ENCODE measurements at regions of chr18 and their contacts with region 1.

Region 1: DNA sequence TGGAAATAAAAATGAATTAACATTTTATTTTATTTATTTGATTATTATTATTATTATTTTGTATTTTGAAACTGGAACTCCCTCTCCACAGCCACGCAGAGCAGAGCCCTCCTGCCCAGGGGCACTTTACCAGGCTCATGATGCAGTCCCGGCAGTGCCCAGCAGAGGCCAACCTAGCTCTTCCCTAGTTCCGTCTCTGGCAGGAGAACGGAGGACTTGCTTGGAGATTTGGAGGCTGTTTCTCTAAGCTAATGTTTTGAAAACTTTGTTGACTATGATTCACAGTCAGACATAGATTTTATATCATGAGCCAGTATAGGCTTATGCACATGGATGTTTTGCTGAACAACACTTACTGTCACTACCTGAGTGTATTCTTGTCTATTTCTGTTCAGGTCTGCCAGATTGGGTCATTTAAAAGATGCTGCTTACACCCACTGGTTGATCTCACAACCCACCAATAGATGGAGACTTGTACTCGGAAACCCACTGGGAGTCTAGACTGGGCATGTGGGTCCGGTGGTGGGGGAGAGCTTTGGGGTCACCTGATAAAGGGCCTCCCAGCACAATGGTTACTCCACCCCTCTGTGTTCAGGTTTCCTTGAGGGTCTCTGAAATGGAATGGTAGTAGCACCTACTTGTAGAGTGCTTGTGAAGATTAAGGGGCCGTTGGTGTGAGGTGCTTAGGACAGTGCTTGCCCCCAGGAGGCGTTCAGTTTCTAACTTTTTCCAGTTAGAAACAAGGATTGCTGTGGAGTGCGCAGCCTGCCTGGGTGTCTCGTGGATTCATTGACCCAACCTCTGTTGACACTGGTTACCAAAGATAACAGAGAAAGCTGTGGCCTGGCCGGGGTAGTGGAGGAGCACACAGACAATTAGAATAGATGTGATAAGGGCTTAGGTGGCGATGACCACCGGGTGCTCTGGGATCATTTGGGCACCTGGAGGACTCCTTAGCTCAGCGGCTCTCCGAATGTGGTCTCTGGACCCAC is 177.3 kb downstream of the HAUS1 start:
- DNase-seq: peak; percentile 81
- H3K4me3 Mint-ChIP-seq: no peak overlapping the region
- H3K27ac Mint-ChIP-seq: no peak overlapping the region
- H3K4me1 Mint-ChIP-seq: peaks cover 25% of the 10 kb centered on the region
- H3K27me3 Mint-ChIP-seq: no peaks in the 10 kb centered on the region
- CTCF ChIP-seq: peak; percentile 89

Region 2: DNA sequence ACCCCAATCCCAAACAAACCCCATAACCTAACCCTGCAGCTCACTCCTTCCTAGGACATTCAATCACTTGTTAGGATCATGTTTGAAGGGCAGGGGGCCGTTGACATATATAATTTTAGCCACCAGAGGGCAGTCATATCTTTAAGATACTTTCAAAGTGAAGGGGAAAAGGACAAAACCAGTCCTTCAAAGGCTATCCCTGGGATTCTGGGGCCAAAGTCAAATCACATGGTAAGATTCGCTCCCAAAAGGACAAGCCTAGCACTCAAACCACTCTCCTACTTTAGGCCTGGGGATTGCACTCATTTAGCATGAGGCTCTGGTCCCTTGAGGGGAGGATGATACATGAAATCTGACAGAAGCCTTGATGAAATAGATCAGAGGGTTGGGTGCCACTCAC is 132.7 kb before region 1 on chr18:
- CTCF ChIA-PET with region 1: interaction called, 32 read pairs
- POLR2A ChIA-PET with region 1: no interaction called
- intact Hi-C with region 1: loop called (anchors 1 kb)
- DNase-seq: peak; percentile 69
- H3K4me3 Mint-ChIP-seq: no peak overlapping the region
- H3K27ac Mint-ChIP-seq: peak overlapping the region; percentile 3
- H3K4me1 Mint-ChIP-seq: peaks cover 18% of the 10 kb centered on the region
- H3K27me3 Mint-ChIP-seq: no peaks in the 10 kb centered on the region
- CTCF ChIP-seq: peak; percentile 49

Region 3: DNA sequence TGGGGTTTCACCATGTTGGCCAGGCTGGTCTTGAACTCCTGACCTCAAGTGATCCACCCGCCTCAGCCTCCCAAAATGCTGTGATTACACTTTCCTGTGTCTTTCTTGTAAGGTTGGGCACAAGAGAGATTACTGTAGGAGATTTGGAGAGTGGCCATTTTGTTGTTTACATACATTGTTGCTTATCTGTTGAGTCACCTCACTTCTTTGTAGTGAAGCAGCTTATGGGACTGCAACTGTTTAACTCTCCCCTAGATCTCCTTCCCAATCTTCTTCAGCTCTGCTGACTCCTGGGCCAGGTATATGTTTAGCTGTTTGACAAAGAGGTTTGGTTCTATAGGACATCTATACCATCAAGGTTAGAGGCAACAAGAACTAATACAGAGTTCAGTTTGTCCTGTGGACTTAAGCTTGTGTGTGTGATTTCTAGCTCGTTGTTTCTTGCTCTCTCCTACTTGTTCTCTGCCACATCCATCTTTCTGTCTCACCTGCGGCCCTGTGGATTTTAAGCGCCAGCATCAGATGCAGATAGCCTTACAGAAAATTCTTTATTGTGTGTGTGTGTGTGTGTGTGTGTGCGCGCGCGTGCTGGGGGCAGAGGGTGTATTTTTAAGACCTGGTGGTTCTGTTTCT is 81.8 kb before region 1 on chr18:
- CTCF ChIA-PET with region 1: no interaction called
- POLR2A ChIA-PET with region 1: no interaction called
- intact Hi-C with region 1: no loop called
- DNase-seq: peak; percentile 54
- H3K4me3 Mint-ChIP-seq: no peak overlapping the region
- H3K27ac Mint-ChIP-seq: peak overlapping the region; percentile 67
- H3K4me1 Mint-ChIP-seq: peaks cover 9% of the 10 kb centered on the region
- H3K27me3 Mint-ChIP-seq: no peaks in the 10 kb centered on the region
- CTCF ChIP-seq: no peak

Region 4: DNA sequence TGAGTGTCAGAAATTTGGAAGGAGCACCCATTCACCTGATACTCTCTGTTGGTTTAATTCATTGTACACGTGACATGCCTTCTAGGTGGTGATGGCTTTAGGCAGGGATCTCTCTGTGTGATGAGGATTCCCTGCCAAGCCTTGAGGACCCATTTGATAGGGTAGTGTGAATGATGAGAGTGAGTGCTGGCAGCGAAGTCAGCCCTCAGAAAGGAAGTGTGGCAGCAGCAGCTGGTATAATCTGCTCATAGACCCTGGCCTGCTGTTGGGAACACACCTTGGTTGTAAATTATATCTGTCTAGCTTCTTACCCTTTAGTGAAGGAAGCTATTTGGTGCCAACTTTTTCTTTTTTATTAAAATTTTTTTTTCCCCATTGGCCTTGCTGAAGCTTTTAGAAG is 12.8 kb before region 1 on chr18:
- CTCF ChIA-PET with region 1: interaction called, 22 read pairs
- POLR2A ChIA-PET with region 1: interaction called, 3 read pairs
- intact Hi-C with region 1: no loop called
- DNase-seq: no peak
- H3K4me3 Mint-ChIP-seq: no peak overlapping the region
- H3K27ac Mint-ChIP-seq: no peak overlapping the region
- H3K4me1 Mint-ChIP-seq: peaks cover 7% of the 10 kb centered on the region
- H3K27me3 Mint-ChIP-seq: no peaks in the 10 kb centered on the region
- CTCF ChIP-seq: no peak

Region 5: DNA sequence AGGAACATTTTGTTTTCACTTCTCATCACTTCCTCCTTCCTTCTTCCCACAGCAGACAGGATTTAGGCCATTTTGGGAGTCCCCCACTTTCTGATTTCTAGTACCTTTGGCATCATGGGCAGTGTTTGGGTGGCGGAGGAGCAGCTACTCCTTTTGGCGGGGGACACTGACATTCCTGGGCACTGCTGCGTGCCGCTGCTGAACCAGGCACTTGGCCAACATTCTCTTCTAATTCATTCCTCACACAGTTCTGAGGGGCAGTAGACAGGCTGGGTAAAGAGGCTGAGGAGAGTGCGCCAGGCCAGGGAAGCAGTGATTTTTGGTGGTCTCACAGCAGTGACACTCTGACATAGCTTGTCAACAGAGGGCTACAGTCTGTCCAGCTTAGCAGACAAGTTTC is 105.3 kb after region 1 on chr18:
- CTCF ChIA-PET with region 1: interaction called, 25 read pairs
- POLR2A ChIA-PET with region 1: interaction called, 3 read pairs
- intact Hi-C with region 1: no loop called
- DNase-seq: peak; percentile 30
- H3K4me3 Mint-ChIP-seq: peak overlapping the region; percentile 53
- H3K27ac Mint-ChIP-seq: peak overlapping the region; percentile 77
- H3K4me1 Mint-ChIP-seq: peaks cover 30% of the 10 kb centered on the region
- H3K27me3 Mint-ChIP-seq: no peaks in the 10 kb centered on the region
- CTCF ChIP-seq: no peak

Region 6: GRCh38 chr18:46502444-46502843 is 221.0 kb after region 1 on chr18:
- CTCF ChIA-PET with region 1: interaction called, 10 read pairs
- POLR2A ChIA-PET with region 1: interaction called, 3 read pairs
- intact Hi-C with region 1: no loop called
- DNase-seq: peak; percentile 43
- H3K4me3 Mint-ChIP-seq: no peak overlapping the region
- H3K27ac Mint-ChIP-seq: no peak overlapping the region
- H3K4me1 Mint-ChIP-seq: no peaks in the 10 kb centered on the region
- H3K27me3 Mint-ChIP-seq: peaks cover 57% of the 10 kb centered on the region
- CTCF ChIP-seq: no peak

Region 7: GRCh38 chr18:46555724-46556123 is 274.2 kb after region 1 on chr18:
- CTCF ChIA-PET with region 1: interaction called, 3 read pairs
- POLR2A ChIA-PET with region 1: no interaction called
- intact Hi-C with region 1: loop called (anchors 1 kb)
- DNase-seq: peak; percentile 65
- H3K4me3 Mint-ChIP-seq: no peak overlapping the region
- H3K27ac Mint-ChIP-seq: no peak overlapping the region
- H3K4me1 Mint-ChIP-seq: no peaks in the 10 kb centered on the region
- H3K27me3 Mint-ChIP-seq: peaks cover 7% of the 10 kb centered on the region
- CTCF ChIP-seq: peak; percentile 54

Region 8: DNA sequence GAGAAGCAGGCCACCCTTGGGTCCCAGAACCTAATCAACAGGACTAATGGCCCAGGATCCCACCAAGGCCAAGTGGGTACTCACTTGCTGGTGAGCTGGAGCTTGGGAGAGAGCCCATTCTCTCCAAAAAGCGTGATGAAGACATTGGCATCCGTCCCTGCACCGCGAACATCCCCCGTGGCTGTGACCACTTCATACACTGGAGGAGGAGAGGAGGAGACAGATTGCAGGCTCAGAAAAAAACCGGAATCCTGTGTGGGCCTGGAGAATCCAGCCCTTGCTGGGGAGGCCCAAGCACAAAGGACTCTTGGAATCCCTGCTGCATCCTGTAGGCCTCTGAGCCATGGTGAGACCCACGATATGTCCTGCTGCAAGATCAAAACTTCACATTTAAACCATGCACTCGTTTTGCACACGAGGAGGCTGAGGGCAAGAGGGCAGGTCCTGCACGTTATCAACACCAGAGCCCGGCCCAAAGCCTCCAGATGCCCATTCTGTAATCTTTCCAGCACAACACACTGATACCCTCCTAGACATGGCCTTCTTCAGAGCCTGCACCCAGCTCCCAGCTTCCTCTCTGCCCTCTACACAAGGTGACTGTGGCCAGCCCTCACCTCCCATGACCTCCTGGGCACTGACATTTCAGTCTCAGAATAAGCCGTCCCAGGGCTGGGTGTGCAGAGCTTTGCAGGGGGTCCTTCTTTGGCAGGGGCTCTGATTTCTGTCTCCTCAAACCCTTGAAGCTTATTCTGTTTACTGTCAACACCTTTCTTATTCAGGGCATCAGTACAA is 367.8 kb after region 1 on chr18:
- CTCF ChIA-PET with region 1: interaction called, 18 read pairs
- POLR2A ChIA-PET with region 1: no interaction called
- intact Hi-C with region 1: no loop called
- DNase-seq: no peak
- H3K4me3 Mint-ChIP-seq: no peak overlapping the region
- H3K27ac Mint-ChIP-seq: no peak overlapping the region
- H3K4me1 Mint-ChIP-seq: no peaks in the 10 kb centered on the region
- H3K27me3 Mint-ChIP-seq: peaks cover 63% of the 10 kb centered on the region
- CTCF ChIP-seq: no peak

Measured in MCF 10A (cell line).